OCI-LY7 (cell line): ENCODE measurements at regions of chr5 and their contacts with region 1.

Region 1: DNA sequence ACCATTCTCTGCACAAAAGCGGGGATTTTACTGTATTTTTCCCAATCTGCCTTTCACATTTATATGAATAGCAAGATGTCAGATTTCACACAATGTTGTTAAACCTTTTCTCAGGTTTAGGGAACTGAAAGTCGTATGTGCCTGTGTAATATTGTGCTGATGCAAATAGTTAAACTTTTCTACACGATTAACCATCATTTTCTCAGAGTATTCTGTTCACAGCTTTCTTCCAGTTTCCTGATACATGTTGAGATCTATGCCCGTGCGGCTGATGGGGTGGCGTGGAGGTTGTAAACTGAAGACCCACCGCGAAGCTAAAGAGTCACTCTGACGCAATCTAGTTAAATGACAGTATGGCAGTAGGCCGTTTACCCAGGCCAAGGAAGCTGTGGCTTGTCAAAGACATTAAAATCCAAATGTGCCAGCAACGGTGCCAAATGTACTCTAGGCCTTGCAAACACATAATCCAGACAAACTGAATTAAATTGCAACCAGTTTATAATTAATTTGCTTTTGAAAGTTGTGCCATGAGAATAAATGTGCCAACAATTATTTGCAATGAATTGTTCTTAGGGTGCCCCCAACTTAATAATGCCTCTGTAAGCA is 145.7 kb downstream of the EBF1 start:
- DNase-seq: peak; percentile 92
- H3K4me3 ChIP-seq: peak overlapping the region; percentile 53
- H3K27ac ChIP-seq: peak overlapping the region; percentile 98
- H3K4me1 ChIP-seq: peaks cover 88% of the 10 kb centered on the region
- CTCF ChIP-seq: no peak

Region 2: GRCh38 chr5:157265714-157266285 is 1688.2 kb before region 1 on chr5 and contains the start of gene CYFIP2:
- CTCF ChIA-PET with region 1: no interaction called
- POLR2A ChIA-PET with region 1: no interaction called
- intact Hi-C with region 1: loop called (anchors 10 kb)
- DNase-seq: peak; percentile 91
- H3K4me3 ChIP-seq: peak within 1 kb of the TSS; percentile 82
- H3K27ac ChIP-seq: peak within 1 kb of the TSS; percentile 98
- H3K4me1 ChIP-seq: peaks cover 63% of the 10 kb centered on the region
- CTCF ChIP-seq: no peak
- total RNA-seq, gene CYFIP2: 221 and 258 TPM in 2 replicates

Region 3: GRCh38 chr5:158751961-158752655 is 201.9 kb before region 1 on chr5:
- CTCF ChIA-PET with region 1: no interaction called
- POLR2A ChIA-PET with region 1: interaction called, 17 read pairs
- intact Hi-C with region 1: loop called (anchors 2 kb)
- DNase-seq: peak; percentile 91
- H3K4me3 ChIP-seq: peak overlapping the region; percentile 57
- H3K27ac ChIP-seq: peak overlapping the region; percentile 99
- H3K4me1 ChIP-seq: peaks cover 83% of the 10 kb centered on the region
- CTCF ChIP-seq: no peak

Region 4: DNA sequence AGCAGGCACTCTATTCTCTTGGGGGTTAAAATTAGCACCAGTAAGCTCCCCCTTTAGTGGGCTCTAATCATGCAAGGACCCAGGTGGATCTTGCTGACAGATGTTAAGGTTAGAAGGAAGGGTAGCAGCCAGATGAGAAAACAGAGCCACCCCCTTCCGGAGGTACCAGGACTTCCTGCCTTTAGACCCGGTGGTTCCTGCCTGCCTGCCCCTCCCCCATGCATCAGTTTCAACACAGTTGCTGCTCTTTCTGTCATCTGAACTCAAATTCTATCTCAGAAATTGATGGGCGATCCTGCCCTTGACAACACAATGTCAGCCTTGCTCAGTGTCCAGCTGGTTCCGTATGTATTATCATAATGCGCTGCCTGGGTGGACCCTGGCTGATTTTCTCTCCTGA is 141.6 kb before region 1 on chr5:
- CTCF ChIA-PET with region 1: interaction called, 3 read pairs
- POLR2A ChIA-PET with region 1: interaction called, 14 read pairs
- intact Hi-C with region 1: loop called (anchors 2 kb)
- DNase-seq: peak; percentile 99
- H3K4me3 ChIP-seq: peak overlapping the region; percentile 57
- H3K27ac ChIP-seq: peak overlapping the region; percentile 94
- H3K4me1 ChIP-seq: peaks cover 96% of the 10 kb centered on the region
- CTCF ChIP-seq: no peak

Region 5: GRCh38 chr5:158967541-158967940 is 13.5 kb after region 1 on chr5:
- CTCF ChIA-PET with region 1: interaction called, 5 read pairs
- POLR2A ChIA-PET with region 1: interaction called, 41 read pairs
- intact Hi-C with region 1: no loop called
- DNase-seq: no peak
- H3K4me3 ChIP-seq: no peak overlapping the region
- H3K27ac ChIP-seq: no peak overlapping the region
- H3K4me1 ChIP-seq: peaks cover 10% of the 10 kb centered on the region
- CTCF ChIP-seq: no peak

Region 6: DNA sequence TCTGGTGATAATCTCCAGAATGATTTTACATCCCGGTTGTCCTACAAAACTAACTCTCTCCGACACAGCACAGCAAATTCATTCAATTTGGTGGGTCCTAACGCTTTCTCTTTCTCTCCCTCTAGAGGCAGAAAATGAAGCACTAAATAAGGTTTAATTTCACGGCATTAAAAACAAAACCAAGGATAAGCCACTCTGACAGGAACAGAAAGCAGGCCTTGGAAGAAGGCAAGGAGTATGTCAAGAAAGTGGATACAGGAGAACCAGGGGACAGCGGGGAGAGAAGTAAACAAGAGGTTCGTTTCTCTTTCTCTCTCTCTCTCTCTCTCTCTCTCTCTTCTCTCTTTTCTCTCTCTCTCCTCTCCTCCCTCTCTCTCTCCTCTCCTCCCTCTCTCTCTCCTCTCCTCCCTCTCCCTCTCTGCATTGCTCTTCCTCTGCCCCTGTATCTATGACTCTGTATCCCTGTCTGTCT is 95.8 kb after region 1 on chr5:
- CTCF ChIA-PET with region 1: interaction called, 3 read pairs
- POLR2A ChIA-PET with region 1: interaction called, 7 read pairs
- intact Hi-C with region 1: loop called (anchors 2 kb)
- DNase-seq: peak; percentile 51
- H3K4me3 ChIP-seq: peak overlapping the region; percentile 50
- H3K27ac ChIP-seq: peak overlapping the region; percentile 86
- H3K4me1 ChIP-seq: peaks cover 86% of the 10 kb centered on the region
- CTCF ChIP-seq: peak; percentile 81

Region 7: DNA sequence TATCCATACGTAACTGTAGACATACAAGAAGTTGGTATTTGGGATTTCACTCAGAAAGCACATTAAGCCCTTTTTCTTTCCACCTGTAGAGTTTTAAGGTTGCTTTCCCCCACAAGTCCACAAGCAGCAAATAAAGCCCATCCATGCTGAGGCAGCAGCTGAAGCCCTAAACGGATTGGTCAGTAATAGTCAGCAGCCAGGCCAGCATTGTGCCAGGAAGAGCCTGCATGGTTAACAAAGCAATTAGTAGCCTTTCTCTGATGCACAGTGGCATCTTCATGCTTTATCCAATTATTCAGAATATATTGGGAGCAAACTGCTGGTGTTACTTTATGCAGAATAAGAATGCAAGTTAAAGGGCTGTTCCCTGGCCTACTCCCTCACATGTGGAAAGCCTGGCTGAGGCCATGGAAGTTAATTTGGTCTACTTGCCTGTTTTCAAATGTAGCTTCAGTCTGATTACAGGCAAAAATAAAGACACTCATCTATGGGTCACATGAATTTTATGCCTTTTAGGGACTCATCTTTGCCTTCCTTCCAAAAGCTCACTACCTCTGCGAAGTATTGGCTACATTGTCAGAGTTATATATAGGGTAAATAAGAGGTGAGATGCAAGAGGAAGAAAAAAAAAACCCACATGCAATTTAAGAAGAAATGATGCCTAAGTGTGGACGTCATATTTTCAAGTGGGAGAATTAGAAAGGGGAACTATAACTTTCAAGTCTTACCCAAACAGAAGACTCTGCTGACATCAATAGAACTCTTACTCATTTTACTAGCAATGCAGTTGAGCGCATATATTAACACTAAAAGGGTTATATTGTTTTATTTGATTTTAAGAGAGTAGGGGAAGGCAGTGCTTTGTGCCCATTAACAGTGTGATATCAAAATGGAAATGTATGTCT is 129.8 kb after region 1 on chr5:
- CTCF ChIA-PET with region 1: no interaction called
- POLR2A ChIA-PET with region 1: no interaction called
- intact Hi-C with region 1: no loop called
- DNase-seq: no peak
- H3K4me3 ChIP-seq: no peak overlapping the region
- H3K27ac ChIP-seq: no peak overlapping the region
- H3K4me1 ChIP-seq: peaks cover 13% of the 10 kb centered on the region
- CTCF ChIP-seq: no peak

Region 8: GRCh38 chr5:159106569-159107282 is 152.7 kb after region 1 on chr5:
- CTCF ChIA-PET with region 1: interaction called, 7 read pairs
- POLR2A ChIA-PET with region 1: interaction called, 14 read pairs
- intact Hi-C with region 1: no loop called
- DNase-seq: peak; percentile 89
- H3K4me3 ChIP-seq: peak overlapping the region; percentile 51
- H3K27ac ChIP-seq: peak overlapping the region; percentile 2
- H3K4me1 ChIP-seq: peaks cover 42% of the 10 kb centered on the region
- CTCF ChIP-seq: peak; percentile 96